GM12878 (cell line): ENCODE measurements at regions of chr6 and their contacts with region 1.

Region 1: DNA sequence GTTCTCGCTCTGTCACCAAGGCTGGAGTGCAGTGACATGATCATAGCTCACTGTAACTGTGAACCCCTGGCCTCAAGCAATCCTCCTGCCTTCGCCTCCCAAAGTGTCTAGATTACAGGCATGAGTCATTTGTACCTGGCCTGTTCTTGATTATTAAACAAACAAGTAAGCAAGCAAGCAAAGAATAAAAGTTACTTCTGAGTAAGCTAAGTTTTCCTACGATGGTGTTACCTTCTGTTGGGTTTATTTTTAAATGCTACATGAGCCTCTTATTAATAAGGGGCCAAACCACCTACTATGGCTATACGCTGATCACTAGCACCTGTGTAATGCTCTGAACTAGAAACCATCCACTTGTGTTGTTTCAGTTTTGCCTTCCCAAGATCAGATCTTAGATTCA is 50.8 kb downstream of the IL22RA2 start:
- DNase-seq: no peak
- ATAC-seq: peak; percentile 74
- H3K4me3 ChIP-seq: no peak overlapping the region
- H3K27ac ChIP-seq: peak overlapping the region; percentile 91
- H3K4me1 ChIP-seq: peaks cover 35% of the 10 kb centered on the region
- H3K27me3 ChIP-seq: no peaks in the 10 kb centered on the region
- CTCF ChIP-seq: no peak
- EP300 ChIP-seq: no peak
- POLR2A ChIP-seq: no peak
- RAD21 ChIP-seq: peak; percentile 12; the same call in 1 of the 2 replicates

Region 2: GRCh38 chr6:137112067-137112355 is 10.6 kb before region 1 on chr6:
- CTCF ChIA-PET with region 1: interaction called, 20 read pairs
- POLR2A ChIA-PET with region 1: interaction called, 20 read pairs
- RAD21 ChIA-PET with region 1: interaction called, 33 read pairs
- SMC1A ChIA-PET with region 1: interaction called, 69 read pairs
- in situ Hi-C with region 1: no loop called
- intact Hi-C with region 1: no loop called
- DNase-seq: no peak
- ATAC-seq: no peak; the same call in 2 of the 3 replicates
- H3K4me3 ChIP-seq: no peak overlapping the region
- H3K27ac ChIP-seq: no peak overlapping the region
- H3K4me1 ChIP-seq: peaks cover 14% of the 10 kb centered on the region
- H3K27me3 ChIP-seq: no peaks in the 10 kb centered on the region
- CTCF ChIP-seq: no peak
- EP300 ChIP-seq: no peak
- POLR2A ChIP-seq: no peak
- RAD21 ChIP-seq: no peak